Heart right ventricle (tissue), 16 donors: ENCODE measurements at regions of chr4 and their contacts with region 1.

Region 1: GRCh38 chr4:145552181-145552822 is 66.9 kb upstream of the MMAA start:
- DNase-seq: no peak
- ATAC-seq: no peak
- H3K4me3 ChIP-seq: no peak overlapping the region
- H3K27ac ChIP-seq: peak overlapping the region in 2 of 10 donors; percentile 11 to 34
- H3K4me1 ChIP-seq: peaks cover 0 to 18% (median 2%) of the 10 kb centered on the region in 9 donors
- H3K27me3 ChIP-seq: no peaks in the 10 kb centered on the region
- CTCF ChIP-seq: no peak

Region 2: GRCh38 chr4:145347684-145348083 is 204.6 kb before region 1 on chr4:
- intact Hi-C with region 1: no loop called
- DNase-seq: no peak
- ATAC-seq: peak in 1 of 8 donors; percentile 58
- H3K4me3 ChIP-seq: no peak overlapping the region
- H3K27ac ChIP-seq: no peak overlapping the region
- H3K4me1 ChIP-seq: peaks cover 0 to 18% (median 0%) of the 10 kb centered on the region in 9 donors
- H3K27me3 ChIP-seq: no peaks in the 10 kb centered on the region
- CTCF ChIP-seq: no peak

Region 3: GRCh38 chr4:145390571-145390970 is 161.7 kb before region 1 on chr4:
- intact Hi-C with region 1: loop called in 1 of 10 experiments (anchors 5 kb)
- DNase-seq: no peak
- ATAC-seq: no peak
- H3K4me3 ChIP-seq: no peak overlapping the region
- H3K27ac ChIP-seq: no peak overlapping the region
- H3K4me1 ChIP-seq: peaks cover 0 to 10% (median 0%) of the 10 kb centered on the region in 9 donors
- H3K27me3 ChIP-seq: no peaks in the 10 kb centered on the region
- CTCF ChIP-seq: no peak

Region 4: DNA sequence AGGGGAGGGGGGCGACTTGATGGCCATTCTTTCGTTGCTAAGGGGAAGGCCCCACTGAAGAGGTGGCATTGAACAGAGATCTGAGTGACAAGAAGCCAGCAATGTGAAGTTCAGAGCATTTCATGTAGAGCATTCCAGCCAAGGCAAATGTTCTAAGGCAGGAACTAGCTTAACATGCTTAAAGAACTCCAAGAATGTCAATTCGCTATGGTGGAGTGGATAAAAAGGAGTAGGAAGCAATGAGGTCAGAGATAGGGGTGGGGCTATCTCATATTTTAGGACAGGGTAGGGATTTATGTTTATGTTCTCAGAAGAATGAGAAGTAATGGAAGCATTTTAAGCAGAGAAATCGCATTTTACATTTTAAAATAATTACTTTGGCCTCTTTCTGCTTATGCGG is 1262.4 kb after region 1 on chr4:
- intact Hi-C with region 1: no loop called
- DNase-seq: no peak
- ATAC-seq: no peak
- H3K4me3 ChIP-seq: no peak overlapping the region
- H3K27ac ChIP-seq: no peak overlapping the region
- H3K4me1 ChIP-seq: no peaks in the 10 kb centered on the region
- H3K27me3 ChIP-seq: no peaks in the 10 kb centered on the region
- CTCF ChIP-seq: no peak